ENCODE measurements at regions of chr12 and their contacts with region 1.

Region 1: GRCh38 chr12:55619354-55620138 is 17.1 kb upstream of the OR10P1 start:
- DNase-seq: peak; percentile 72
- H3K4me3 ChIP-seq: no peak overlapping the region
- H3K27ac ChIP-seq: no peak overlapping the region
- H3K4me1 ChIP-seq: no peaks in the 10 kb centered on the region
- H3K27me3 ChIP-seq: no peaks in the 10 kb centered on the region
- CTCF ChIP-seq: peak; percentile 62

Region 2: DNA sequence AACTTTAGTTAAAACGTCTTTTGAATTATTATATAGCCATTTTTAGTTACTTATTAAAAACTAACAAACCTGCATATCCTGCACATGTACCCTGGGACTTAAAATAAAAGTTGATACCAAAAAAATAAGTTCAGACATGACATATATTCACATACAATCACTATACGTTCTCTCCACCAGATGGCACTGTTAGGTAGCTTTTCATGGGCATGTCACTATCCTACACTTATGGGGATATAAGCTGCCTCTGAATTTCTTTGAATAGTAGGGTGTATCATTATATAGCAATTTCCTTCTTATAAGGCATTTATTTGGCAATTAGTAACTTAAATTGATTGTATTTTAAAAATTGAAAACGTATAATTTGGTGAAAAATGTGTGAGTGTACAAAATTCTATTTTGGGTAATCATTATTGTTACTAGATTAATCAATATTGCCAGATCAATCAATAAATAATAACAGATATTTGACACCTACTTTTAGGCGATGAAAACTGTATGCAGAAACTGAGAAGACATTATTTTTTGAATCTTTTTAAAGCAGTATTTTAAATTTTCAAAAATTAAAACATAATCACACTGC is 430.5 kb before region 1 on chr12:
- intact Hi-C with region 1: loop called (anchors 2 kb)
- DNase-seq: peak; percentile 63
- H3K4me3 ChIP-seq: no peak overlapping the region
- H3K27ac ChIP-seq: no peak overlapping the region
- H3K4me1 ChIP-seq: no peaks in the 10 kb centered on the region
- H3K27me3 ChIP-seq: no peaks in the 10 kb centered on the region
- CTCF ChIP-seq: peak; percentile 67

Region 3: GRCh38 chr12:55659486-55660385 is 40.2 kb after region 1 on chr12:
- intact Hi-C with region 1: no loop called
- DNase-seq: no peak
- H3K4me3 ChIP-seq: no peak overlapping the region
- H3K27ac ChIP-seq: no peak overlapping the region
- H3K4me1 ChIP-seq: no peaks in the 10 kb centered on the region
- H3K27me3 ChIP-seq: no peaks in the 10 kb centered on the region
- CTCF ChIP-seq: no peak